ENCODE measurements at regions of chr6 and their contacts with region 1.

Region 1: GRCh38 chr6:149565527-149566409 is at the start of gene GINM1:
- DNase-seq: peak; percentile 80 to 94
- H3K4me3 ChIP-seq: peak within 1 kb of the TSS; percentile 89
- H3K27ac ChIP-seq: peak within 1 kb of the TSS; percentile 72
- H3K4me1 ChIP-seq: peaks cover 30% of the 10 kb centered on the region
- H3K27me3 ChIP-seq: no peaks in the 10 kb centered on the region
- CTCF ChIP-seq: peak; percentile 71
- total RNA-seq, gene GINM1: 14.5 and 14.7 TPM in 2 replicates

Region 2: GRCh38 chr6:148530394-148530953 is 1035.3 kb before region 1 on chr6:
- CTCF ChIA-PET with region 1: interaction called, 13 read pairs
- POLR2A ChIA-PET with region 1: no interaction called
- intact Hi-C with region 1: no loop called
- DNase-seq: peak in 1 of 2 experiments; percentile 9
- H3K4me3 ChIP-seq: no peak overlapping the region
- H3K27ac ChIP-seq: no peak overlapping the region; the same call in 1 of the 2 replicates
- H3K4me1 ChIP-seq: no peaks in the 10 kb centered on the region
- H3K27me3 ChIP-seq: no peaks in the 10 kb centered on the region
- CTCF ChIP-seq: no peak

Region 3: DNA sequence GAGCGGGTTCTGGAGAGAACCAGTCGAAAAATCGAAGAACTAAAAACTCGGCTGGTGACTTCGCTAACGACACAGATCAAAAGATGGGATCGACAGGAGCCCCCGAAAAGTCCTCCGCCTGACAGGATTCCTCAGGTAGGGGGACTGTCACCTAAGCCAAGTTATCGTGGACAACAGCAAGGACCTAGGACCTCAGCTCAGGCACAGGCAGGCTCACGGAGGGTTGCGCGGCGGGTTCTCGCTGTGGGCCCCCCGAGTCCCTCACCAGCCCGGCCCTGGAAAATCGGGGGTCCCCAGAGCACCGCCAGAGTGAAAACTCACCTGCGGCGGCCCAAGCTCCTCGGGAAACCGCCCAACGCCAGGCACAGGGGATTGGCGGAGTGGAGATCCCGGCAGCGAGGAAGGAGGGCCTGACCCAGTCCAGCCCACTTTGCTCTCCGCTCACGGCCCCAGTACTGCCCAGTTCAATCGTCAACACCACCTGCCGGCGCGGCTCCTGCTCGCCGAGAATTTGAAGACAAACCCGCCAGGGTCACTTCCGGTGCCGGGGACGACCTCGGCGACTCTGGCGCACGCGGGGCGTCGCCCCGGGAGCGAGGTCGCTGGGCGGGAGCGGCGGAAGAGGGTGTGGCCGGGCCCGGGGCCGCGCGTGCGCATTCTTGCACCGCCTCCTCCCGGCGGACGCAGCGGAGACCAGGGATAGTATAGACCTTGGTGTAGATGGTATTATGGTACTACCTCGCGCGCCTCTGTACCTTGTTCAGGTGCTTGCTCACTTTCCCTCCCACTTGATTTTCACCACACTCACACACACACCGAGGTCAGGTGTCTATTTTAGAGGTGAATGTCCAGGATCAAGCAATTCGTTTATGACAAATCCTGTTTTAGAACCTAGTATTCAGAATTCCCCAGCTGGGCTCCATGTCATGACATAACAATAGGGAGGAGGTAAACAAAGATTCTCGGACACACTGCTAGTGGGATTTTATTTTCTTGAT is 82.7 kb after region 1 on chr6 and contains the start of gene KATNA1:
- CTCF ChIA-PET with region 1: no interaction called
- POLR2A ChIA-PET with region 1: no interaction called
- intact Hi-C with region 1: loop called (anchors 5 kb)
- DNase-seq: peak; percentile 79 to 90
- H3K4me3 ChIP-seq: peak within 1 kb of the TSS; percentile 81
- H3K27ac ChIP-seq: peak within 1 kb of the TSS; percentile 67
- H3K4me1 ChIP-seq: peaks cover 20% of the 10 kb centered on the region
- H3K27me3 ChIP-seq: no peaks in the 10 kb centered on the region
- CTCF ChIP-seq: no peak
- total RNA-seq, gene KATNA1: 12.4 and 16.1 TPM in 2 replicates

Region 4: GRCh38 chr6:150632785-150633485 is 1067.2 kb after region 1 on chr6:
- CTCF ChIA-PET with region 1: no interaction called
- POLR2A ChIA-PET with region 1: no interaction called
- intact Hi-C with region 1: no loop called
- DNase-seq: no peak
- H3K4me3 ChIP-seq: no peak overlapping the region
- H3K27ac ChIP-seq: no peak overlapping the region
- H3K4me1 ChIP-seq: no peaks in the 10 kb centered on the region
- H3K27me3 ChIP-seq: no peaks in the 10 kb centered on the region
- CTCF ChIP-seq: no peak